A673 (cell line): ENCODE measurements at regions of chr10 and their contacts with region 1.

Region 1: GRCh38 chr10:90988802-90989201 is 67.9 kb upstream of the ANKRD1 start:
- DNase-seq: no peak
- H3K4me3 ChIP-seq: no peak overlapping the region
- H3K27ac ChIP-seq: no peak overlapping the region
- H3K4me1 ChIP-seq: no peaks in the 10 kb centered on the region
- H3K27me3 ChIP-seq: peaks cover 21% of the 10 kb centered on the region
- CTCF ChIP-seq: no peak

Region 2: DNA sequence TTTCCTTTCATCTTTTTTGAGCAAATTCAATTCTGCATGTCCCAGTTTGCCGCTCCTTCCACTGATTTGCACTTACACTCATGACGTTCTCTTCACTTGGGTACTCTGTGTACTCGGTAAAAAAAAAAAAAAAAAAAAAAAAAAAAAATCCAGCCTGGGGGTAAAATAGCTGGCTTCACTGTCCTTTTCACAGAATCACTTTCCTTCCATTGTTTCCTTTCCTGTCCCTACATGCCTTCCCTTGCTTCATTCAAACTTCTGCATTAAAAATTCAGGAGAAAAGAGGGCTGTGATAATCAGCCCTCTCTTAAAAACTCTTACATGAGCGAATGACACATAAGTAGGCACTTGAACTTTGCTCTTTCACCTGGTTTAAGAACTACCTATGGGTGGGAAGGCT is 76.6 kb before region 1 on chr10:
- CTCF ChIA-PET with region 1: interaction called, 16 read pairs
- POLR2A ChIA-PET with region 1: no interaction called
- intact Hi-C with region 1: no loop called
- DNase-seq: no peak
- H3K4me3 ChIP-seq: no peak overlapping the region
- H3K27ac ChIP-seq: no peak overlapping the region
- H3K4me1 ChIP-seq: no peaks in the 10 kb centered on the region
- H3K27me3 ChIP-seq: no peaks in the 10 kb centered on the region
- CTCF ChIP-seq: no peak